Prostate gland (tissue), 2 donors: ENCODE measurements at regions of chrX and their contacts with region 1.

Region 1: GRCh38 chrX:136909706-136910564 is 29.4 kb upstream of the RBMX start:
- DNase-seq: peak; percentile 86
- H3K4me3 ChIP-seq: peak overlapping the region; percentile 47 to 50
- H3K27ac ChIP-seq: peak overlapping the region; percentile 77 to 83
- H3K4me1 ChIP-seq: no peaks in the 10 kb centered on the region
- H3K27me3 ChIP-seq: no peaks in the 10 kb centered on the region
- CTCF ChIP-seq: peak in 1 of 4 experiments; percentile 4
- POLR2A ChIP-seq: peak; percentile 58

Region 2: DNA sequence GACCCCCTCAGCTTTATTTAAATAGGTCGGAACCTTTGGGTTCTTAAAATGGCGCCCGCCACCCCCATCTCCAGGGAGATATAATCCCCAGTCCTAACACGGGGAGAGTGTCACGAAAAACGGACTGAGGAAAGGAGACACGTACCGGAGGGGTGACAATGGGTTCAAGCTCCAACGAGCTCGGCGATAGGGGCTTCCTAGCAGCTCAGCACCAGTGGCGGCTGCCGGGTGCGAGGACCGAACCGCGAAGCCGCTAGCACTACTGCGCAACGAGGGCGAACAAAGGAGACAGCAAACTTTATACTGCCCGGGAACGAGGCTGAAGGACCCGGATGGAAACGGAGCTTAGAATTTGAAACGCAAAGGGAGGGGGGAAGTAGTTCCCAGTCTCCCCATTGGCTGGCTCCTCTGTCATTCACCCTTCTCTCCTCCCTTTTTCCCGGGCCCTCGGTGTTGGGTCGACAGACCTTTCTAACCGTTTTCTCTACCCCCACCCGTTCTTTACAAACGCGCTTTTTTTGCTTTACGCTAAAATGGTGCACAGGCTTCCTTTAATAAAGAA is 29.4 kb before region 1 on chrX and contains the start of gene RBMX:
- intact Hi-C with region 1: loop called (anchors 2 kb)
- DNase-seq: peak; percentile 90
- H3K4me3 ChIP-seq: peak within 1 kb of the TSS; percentile 58 to 60
- H3K27ac ChIP-seq: peak within 1 kb of the TSS; percentile 87 to 91
- H3K4me1 ChIP-seq: no peaks in the 10 kb centered on the region
- H3K27me3 ChIP-seq: no peaks in the 10 kb centered on the region
- CTCF ChIP-seq: peak in 1 of 4 experiments; percentile 4
- POLR2A ChIP-seq: peak; percentile 89
- total RNA-seq, gene RBMX: 191 to 295 TPM

Region 3: GRCh38 chrX:137164329-137164728 is 254.4 kb after region 1 on chrX:
- intact Hi-C with region 1: no loop called
- DNase-seq: no peak
- H3K4me3 ChIP-seq: no peak overlapping the region
- H3K27ac ChIP-seq: no peak overlapping the region
- H3K4me1 ChIP-seq: no peaks in the 10 kb centered on the region
- H3K27me3 ChIP-seq: no peaks in the 10 kb centered on the region
- CTCF ChIP-seq: no peak
- POLR2A ChIP-seq: no peak